HepG2 (cell line): ENCODE measurements at regions of chr1 and their contacts with region 1.

Region 1: GRCh38 chr1:42576935-42577334 is 81.3 kb upstream of the PPIH start:
- DNase-seq: no peak
- ATAC-seq: no peak
- H3K4me3 ChIP-seq: no peak overlapping the region
- H3K27ac ChIP-seq: no peak overlapping the region
- H3K4me1 ChIP-seq: no peaks in the 10 kb centered on the region
- H3K27me3 ChIP-seq: no peaks in the 10 kb centered on the region
- CTCF ChIP-seq: no peak
- EP300 ChIP-seq: no peak
- POLR2A ChIP-seq: no peak
- RAD21 ChIP-seq: no peak

Region 2: DNA sequence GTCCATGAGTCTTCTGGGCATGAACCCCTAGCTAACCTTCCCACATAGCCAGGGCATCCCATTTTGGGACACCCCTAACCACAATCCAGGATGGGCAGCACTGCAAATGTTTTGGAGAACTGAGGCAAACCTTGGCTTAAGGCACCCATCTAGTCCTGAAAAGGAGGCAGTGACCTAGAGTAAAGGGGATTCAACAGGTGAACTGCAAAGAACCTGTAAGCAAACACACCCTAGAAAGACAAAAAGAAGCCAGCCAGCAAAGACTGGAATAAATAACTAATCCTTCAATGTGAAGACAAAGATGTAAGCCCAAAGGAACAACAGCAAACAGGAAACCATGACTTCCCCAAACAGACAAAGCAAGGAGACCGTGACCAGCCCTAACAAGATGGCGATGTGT is 24.5 kb after region 1 on chr1:
- CTCF ChIA-PET with region 1: no interaction called
- POLR2A ChIA-PET with region 1: no interaction called
- in situ Hi-C with region 1: no loop called
- intact Hi-C with region 1: no loop called
- DNase-seq: no peak
- ATAC-seq: no peak
- H3K4me3 ChIP-seq: no peak overlapping the region
- H3K27ac ChIP-seq: no peak overlapping the region
- H3K4me1 ChIP-seq: no peaks in the 10 kb centered on the region
- H3K27me3 ChIP-seq: peaks cover 0 to 5% of the 10 kb centered on the region in 2 experiments; a peak in 1 of 5 replicates
- CTCF ChIP-seq: no peak
- EP300 ChIP-seq: no peak
- POLR2A ChIP-seq: no peak
- RAD21 ChIP-seq: no peak

Region 3: GRCh38 chr1:42756956-42757891 is 180.3 kb after region 1 on chr1:
- CTCF ChIA-PET with region 1: interaction called, 11 read pairs
- POLR2A ChIA-PET with region 1: no interaction called
- in situ Hi-C with region 1: no loop called
- intact Hi-C with region 1: no loop called
- DNase-seq: peak; percentile 70
- ATAC-seq: peak; percentile 87
- H3K4me3 ChIP-seq: no peak overlapping the region
- H3K27ac ChIP-seq: no peak overlapping the region
- H3K4me1 ChIP-seq: peaks cover 20% of the 10 kb centered on the region
- H3K27me3 ChIP-seq: no peaks in the 10 kb centered on the region
- CTCF ChIP-seq: peak; percentile 81
- EP300 ChIP-seq: no peak
- POLR2A ChIP-seq: no peak
- RAD21 ChIP-seq: peak; percentile 40; the same call in 1 of the 2 replicates